ENCODE measurements at regions of chr17 and their contacts with region 1.

Region 1: GRCh38 chr17:27293898-27294688 is at the start of gene WSB1:
- DNase-seq: peak; percentile 95 to 97 (median 96)
- ATAC-seq: peak; percentile 95 to 97 (median 97)
- H3K4me3 ChIP-seq: peak within 1 kb of the TSS; percentile 72 to 99 (median 80)
- H3K27ac ChIP-seq: peak within 1 kb of the TSS; percentile 98 to 100 (median 99)
- H3K4me1 ChIP-seq: peaks cover 11 to 44% (median 34%) of the 10 kb centered on the region in 12 donors
- H3K27me3 ChIP-seq: peaks cover 0 to 4% (median 0%) of the 10 kb centered on the region in 9 donors
- CTCF ChIP-seq: peak in 1 of 12 donors; percentile 11
- POLR2A ChIP-seq: peak; percentile 80 to 98
- total RNA-seq, gene WSB1: 22.3 to 119 (median 53.4) TPM

Region 2: DNA sequence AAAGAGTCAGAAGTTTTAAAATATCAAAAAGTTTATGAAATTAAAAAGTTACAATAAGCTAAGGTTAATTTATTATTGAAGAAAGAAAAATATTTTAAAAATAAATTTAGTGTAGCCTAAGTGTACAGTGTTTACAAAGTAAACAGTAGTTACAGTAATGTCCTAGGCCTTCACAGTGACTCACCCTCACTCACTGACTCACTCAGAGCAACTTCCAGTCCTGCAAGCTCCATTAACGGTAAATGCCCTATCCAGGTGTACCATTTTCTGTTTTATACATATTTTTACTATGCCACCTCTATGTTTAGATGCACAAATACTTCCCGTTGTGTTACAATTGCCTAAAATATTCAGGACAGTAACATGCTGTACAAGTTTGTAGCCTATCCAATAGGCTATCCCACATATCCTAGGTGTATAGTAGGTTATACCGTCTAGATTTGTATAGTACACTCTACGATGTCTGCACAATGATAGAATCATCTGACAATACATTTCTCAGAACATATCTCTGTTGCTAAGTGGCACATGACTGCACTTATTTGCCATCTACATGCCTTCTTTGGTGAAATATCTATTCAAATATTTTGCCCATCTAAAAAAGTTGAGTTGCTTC is 67.4 kb before region 1 on chr17:
- intact Hi-C with region 1: no loop called
- DNase-seq: no peak
- ATAC-seq: no peak
- H3K4me3 ChIP-seq: no peak overlapping the region
- H3K27ac ChIP-seq: no peak overlapping the region
- H3K4me1 ChIP-seq: no peaks in the 10 kb centered on the region
- H3K27me3 ChIP-seq: no peaks in the 10 kb centered on the region
- CTCF ChIP-seq: no peak
- POLR2A ChIP-seq: no peak

Region 3: DNA sequence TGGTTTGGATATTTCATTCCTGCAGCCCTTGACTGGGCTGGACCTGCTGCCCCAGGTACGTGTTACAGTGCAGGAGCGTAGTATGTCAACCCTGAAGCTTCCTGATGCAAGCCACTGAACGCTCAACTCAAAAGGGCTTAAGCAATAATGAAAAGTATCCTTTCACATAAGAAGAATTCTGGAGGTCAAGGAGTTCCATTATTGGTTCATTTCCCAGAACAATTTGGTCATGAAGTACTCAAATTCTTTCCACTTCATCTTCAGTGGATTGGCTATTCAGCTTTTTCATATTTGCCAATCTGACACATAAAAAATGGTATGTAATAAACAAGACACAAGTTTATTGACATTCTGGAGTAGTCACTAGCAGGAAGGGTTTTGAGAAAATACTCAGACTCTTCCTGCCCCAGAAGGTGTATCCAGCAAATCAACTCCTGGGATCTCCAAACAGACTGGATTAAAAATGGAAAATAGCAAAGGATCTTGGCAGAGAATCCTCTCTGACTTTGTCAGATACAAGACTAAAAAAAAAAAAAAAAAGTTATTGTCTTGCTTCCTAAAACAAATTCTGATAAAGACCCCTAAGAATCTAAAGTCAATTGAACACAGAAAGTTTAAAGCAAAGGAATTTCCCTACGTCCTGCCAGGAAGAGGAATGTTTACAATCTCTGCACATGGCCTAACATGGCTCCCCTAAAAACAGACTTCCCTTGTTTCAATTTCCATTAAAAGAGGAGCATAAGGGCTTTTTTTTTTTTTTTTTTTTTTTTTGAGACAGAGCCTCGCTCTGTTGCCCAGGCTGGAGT is 37.7 kb before region 1 on chr17:
- intact Hi-C with region 1: loop called in 1 of 10 experiments (anchors 2 kb)
- DNase-seq: no peak
- ATAC-seq: peak in 1 of 4 donors; percentile 48
- H3K4me3 ChIP-seq: no peak overlapping the region
- H3K27ac ChIP-seq: peak overlapping the region; percentile 13 to 73 (median 55)
- H3K4me1 ChIP-seq: peaks cover 0 to 23% (median 9%) of the 10 kb centered on the region in 12 donors
- H3K27me3 ChIP-seq: no peaks in the 10 kb centered on the region
- CTCF ChIP-seq: no peak
- POLR2A ChIP-seq: no peak

Region 4: GRCh38 chr17:27265333-27265732 is 28.8 kb before region 1 on chr17:
- intact Hi-C with region 1: loop called in 2 of 10 experiments (anchors 2 kb)
- DNase-seq: no peak
- ATAC-seq: peak in 3 of 4 donors; percentile 60 to 69 (median 67)
- H3K4me3 ChIP-seq: no peak overlapping the region
- H3K27ac ChIP-seq: peak overlapping the region in 7 of 12 donors; percentile 13 to 77 (median 18)
- H3K4me1 ChIP-seq: peaks cover 0 to 37% (median 5%) of the 10 kb centered on the region in 12 donors
- H3K27me3 ChIP-seq: no peaks in the 10 kb centered on the region
- CTCF ChIP-seq: no peak
- POLR2A ChIP-seq: no peak

Region 5: DNA sequence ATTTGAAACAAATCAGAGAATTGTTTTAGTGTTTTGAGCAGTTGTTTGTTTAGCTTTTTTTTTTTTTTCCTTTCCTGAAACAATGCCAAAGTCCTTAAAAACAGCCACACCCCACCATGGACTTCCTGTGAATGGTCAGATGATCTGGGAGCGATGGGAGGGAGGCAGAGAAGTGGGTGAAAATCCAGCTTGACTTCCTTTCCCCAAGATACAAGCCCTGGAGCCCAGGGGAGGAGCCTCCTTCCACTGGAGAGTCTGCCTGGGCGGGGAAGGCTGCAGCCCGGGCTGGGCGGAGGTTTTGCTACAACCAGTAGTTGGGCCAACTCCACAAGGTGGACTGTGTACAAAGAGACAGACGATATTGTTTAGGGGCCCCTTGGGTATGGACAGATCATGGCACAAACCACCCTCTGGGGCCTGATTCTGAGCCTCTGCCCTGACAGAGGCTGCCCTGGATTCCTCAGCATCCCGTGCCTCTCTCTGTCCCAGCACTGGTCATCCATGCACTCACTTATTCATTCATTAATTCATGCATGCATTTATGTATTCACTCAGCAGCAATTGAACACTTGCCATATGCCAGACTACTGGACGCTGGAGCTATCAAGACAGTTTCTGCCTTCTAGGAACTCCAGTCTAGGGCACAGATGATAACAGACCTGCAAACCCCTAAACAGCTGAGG is 29.6 kb after region 1 on chr17:
- intact Hi-C with region 1: loop called in 1 of 10 experiments (anchors 2 kb)
- DNase-seq: peak; percentile 78 to 91 (median 87)
- ATAC-seq: peak; percentile 40 to 87 (median 78)
- H3K4me3 ChIP-seq: peak overlapping the region in 1 of 12 donors; percentile 5
- H3K27ac ChIP-seq: peak overlapping the region in 11 of 12 donors; percentile 51 to 77 (median 67)
- H3K4me1 ChIP-seq: peaks cover 10 to 55% (median 42%) of the 10 kb centered on the region in 12 donors
- H3K27me3 ChIP-seq: no peaks in the 10 kb centered on the region
- CTCF ChIP-seq: no peak
- POLR2A ChIP-seq: no peak

Region 6: DNA sequence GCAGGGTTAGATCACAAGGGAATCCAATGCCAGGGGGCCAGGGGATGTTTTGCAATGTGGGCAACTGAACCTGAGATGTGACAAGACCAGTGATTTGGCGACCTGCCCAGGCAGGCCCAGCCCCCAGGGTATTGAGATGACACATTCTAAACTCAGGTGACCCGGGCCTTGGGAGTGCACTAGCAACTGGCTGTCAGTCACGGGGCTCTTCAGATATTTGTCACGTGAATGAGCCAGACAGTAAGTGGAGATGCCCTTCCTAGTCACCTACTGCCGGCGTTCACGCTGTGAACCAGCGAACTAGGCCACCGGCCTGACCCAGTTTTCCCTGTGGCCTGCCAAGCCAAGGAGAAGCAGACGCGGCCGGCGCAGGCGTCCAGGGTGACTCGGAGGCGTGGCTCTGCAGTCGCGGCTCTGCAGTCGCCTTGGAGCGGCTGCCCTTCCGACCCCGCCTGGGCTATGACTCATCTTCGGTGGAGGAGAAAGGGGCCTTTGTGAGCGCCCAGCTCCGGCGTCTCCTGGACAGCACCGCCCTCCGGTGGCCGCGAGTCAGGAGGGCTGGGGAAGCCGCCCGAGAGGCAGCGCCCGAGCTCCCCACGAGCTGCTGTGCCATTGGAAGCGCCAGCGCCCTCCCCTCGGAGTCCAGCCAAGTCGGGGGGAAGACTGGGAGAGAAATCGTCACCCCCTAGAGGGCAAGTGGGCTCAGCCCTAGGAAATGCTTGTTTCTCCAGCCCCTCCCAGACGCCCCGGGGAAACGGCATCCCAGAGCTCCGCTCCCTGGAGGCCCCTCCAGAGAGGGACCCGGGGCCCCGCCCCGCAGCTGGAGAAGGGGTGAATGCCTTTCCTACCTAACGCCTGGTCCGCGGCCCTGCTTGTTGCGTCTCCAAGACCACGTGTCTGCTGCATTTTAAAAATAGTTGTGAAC is 38.7 kb after region 1 on chr17:
- intact Hi-C with region 1: loop called in 8 of 10 experiments (anchors 2 to 5 kb)
- DNase-seq: peak; percentile 98 to 100 (median 99)
- ATAC-seq: peak; percentile 95 to 97 (median 96)
- H3K4me3 ChIP-seq: peak overlapping the region in 11 of 12 donors; percentile 29 to 69 (median 57)
- H3K27ac ChIP-seq: peak overlapping the region; percentile 92 to 99 (median 96)
- H3K4me1 ChIP-seq: peaks cover 0 to 35% (median 19%) of the 10 kb centered on the region in 12 donors
- H3K27me3 ChIP-seq: no peaks in the 10 kb centered on the region
- CTCF ChIP-seq: peak; percentile 82 to 99 (median 93)
- POLR2A ChIP-seq: peak in 1 of 2 donors; percentile 48

Region 7: GRCh38 chr17:27526604-27527230 is 232.6 kb after region 1 on chr17:
- intact Hi-C with region 1: no loop called
- DNase-seq: peak in 2 of 5 donors; percentile 43 to 48
- ATAC-seq: peak in 3 of 4 donors; percentile 66 to 76 (median 71)
- H3K4me3 ChIP-seq: no peak overlapping the region
- H3K27ac ChIP-seq: peak overlapping the region in 1 of 12 donors; percentile 30
- H3K4me1 ChIP-seq: peaks cover 0 to 59% (median 5%) of the 10 kb centered on the region in 12 donors
- H3K27me3 ChIP-seq: no peaks in the 10 kb centered on the region
- CTCF ChIP-seq: no peak
- POLR2A ChIP-seq: no peak